PC-3 (cell line): ENCODE measurements at regions of chr21 and their contacts with region 1.

Region 1: DNA sequence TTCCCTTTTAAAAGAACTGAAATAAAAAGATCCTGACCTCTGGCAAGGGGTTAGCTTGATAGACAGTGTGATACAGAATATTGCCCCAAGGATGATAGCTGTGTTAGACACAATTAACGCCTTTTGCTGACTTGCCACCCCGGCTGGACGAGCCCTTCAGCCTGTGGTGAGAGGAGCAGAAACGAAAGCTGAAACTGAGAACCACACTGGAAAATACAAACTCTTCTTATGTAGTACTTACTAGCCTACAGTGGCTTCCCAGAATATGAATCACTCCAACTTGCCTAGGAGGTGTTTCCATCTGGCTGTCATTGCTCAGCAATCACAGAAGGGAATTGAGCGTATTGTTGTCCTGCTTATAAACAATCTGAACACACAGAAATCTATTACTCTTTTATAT is 22.9 kb downstream of the SAMSN1 start:
- DNase-seq: no peak
- ATAC-seq: no peak
- H3K4me3 ChIP-seq: no peak overlapping the region
- H3K27ac ChIP-seq: no peak overlapping the region
- H3K4me1 ChIP-seq: no peaks in the 10 kb centered on the region
- H3K27me3 ChIP-seq: peaks cover 28% of the 10 kb centered on the region
- CTCF ChIP-seq: no peak

Region 2: DNA sequence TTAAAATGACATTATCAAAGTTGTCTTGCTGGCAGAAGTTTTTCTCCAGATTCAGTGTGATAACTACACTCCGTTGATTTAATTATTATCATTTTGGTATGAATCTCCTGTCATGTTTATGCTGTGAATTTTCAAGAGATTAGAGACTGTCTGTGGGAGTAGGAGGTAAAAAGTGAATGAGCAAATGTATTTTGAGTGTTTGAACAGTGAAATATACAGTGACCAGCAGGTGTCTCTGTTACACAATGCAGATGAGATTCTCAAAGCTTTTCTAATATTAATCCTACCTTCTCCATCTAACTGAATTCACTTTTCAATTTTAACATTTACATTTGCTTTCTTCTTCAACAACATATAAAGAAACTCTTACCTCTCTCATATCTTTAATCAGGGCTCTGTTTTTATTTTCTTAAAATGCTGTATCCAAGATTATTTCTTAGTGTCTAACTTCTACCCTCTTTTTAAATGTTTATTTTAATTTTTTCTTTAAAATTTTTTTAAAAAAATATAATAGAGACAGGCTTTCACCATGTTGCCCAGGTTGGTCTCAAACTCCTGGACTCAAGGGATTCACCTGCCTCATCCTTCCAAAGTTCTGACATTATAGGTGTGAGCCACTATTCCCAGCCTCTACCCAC is 119.4 kb before region 1 on chr21:
- CTCF ChIA-PET with region 1: no interaction called
- POLR2A ChIA-PET with region 1: no interaction called
- intact Hi-C with region 1: no loop called
- DNase-seq: peak; percentile 65
- ATAC-seq: peak; percentile 80
- H3K4me3 ChIP-seq: no peak overlapping the region
- H3K27ac ChIP-seq: no peak overlapping the region
- H3K4me1 ChIP-seq: no peaks in the 10 kb centered on the region
- H3K27me3 ChIP-seq: no peaks in the 10 kb centered on the region
- CTCF ChIP-seq: peak; percentile 86

Region 3: DNA sequence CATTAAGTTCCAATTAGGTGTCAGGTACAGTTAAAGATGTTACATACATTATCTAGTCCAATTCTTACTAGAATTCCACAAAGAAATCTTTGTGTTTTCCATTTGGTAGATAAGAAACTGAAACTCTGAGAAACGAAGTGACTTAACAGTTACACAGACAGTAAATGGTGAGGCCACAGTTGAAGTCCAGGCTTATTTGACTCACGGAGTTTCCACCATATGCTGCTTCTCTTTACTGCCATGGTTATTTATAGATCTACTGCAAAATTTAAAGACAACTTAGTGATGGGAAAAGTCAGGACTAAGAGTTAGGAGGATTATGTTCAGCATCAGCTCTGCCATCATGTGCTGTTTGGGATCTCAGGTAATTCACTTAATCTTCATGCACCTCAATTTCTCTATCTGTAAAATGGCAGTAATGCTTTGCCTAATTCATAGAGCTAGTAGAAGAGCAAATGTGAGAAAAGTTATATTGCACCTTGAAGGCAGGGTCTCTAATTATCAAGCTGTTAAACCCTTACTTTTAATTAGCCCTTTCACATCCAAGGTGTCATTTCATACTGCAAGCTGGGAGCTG is 49.1 kb after region 1 on chr21:
- CTCF ChIA-PET with region 1: no interaction called
- POLR2A ChIA-PET with region 1: no interaction called
- intact Hi-C with region 1: loop called (anchors 10 kb)
- DNase-seq: no peak
- ATAC-seq: no peak
- H3K4me3 ChIP-seq: no peak overlapping the region
- H3K27ac ChIP-seq: no peak overlapping the region
- H3K4me1 ChIP-seq: no peaks in the 10 kb centered on the region
- H3K27me3 ChIP-seq: peaks cover 18% of the 10 kb centered on the region; the same call in 1 of the 2 replicates
- CTCF ChIP-seq: no peak

Region 4: GRCh38 chr21:14993115-14993514 is 469.9 kb after region 1 on chr21:
- CTCF ChIA-PET with region 1: no interaction called
- POLR2A ChIA-PET with region 1: interaction called, 17 read pairs
- intact Hi-C with region 1: no loop called
- DNase-seq: no peak
- ATAC-seq: no peak
- H3K4me3 ChIP-seq: no peak overlapping the region
- H3K27ac ChIP-seq: no peak overlapping the region
- H3K4me1 ChIP-seq: peaks cover 17% of the 10 kb centered on the region; the same call in 1 of the 2 replicates
- H3K27me3 ChIP-seq: no peaks in the 10 kb centered on the region
- CTCF ChIP-seq: no peak